Left ventricle myocardium inferior (tissue), 1 donor: ENCODE measurements at regions of chr22 and their contacts with region 1.

Region 1: DNA sequence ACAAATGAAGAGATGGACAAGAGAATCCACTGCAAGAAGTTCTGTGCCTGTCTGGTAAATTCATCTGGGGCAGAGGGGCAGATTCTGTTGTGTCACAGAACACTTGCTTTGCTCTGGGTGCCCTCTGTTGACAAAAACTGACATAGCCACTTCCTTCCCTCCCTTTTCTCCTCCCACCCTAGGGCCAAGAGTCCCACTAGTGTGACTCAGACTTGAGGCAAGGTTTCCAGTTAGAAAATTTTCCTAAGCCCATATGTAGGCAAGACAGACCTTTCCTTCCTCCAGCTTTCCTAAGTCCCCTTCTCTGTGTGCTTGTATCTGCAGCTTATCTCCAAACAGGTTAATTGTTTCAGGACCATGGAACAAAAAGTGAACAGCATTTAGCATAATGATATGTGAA is 106.8 kb downstream of the RBFOX2 start:
- DNase-seq: no peak
- H3K4me3 ChIP-seq: no peak overlapping the region
- H3K27ac ChIP-seq: peak overlapping the region; percentile 87
- H3K4me1 ChIP-seq: peaks cover 66% of the 10 kb centered on the region
- H3K27me3 ChIP-seq: no peaks in the 10 kb centered on the region
- CTCF ChIP-seq: peak; percentile 81

Region 2: GRCh38 chr22:35627264-35628041 is 294.3 kb before region 1 on chr22:
- intact Hi-C with region 1: loop called (anchors 5 kb)
- DNase-seq: peak; percentile 82
- H3K4me3 ChIP-seq: peak overlapping the region; percentile 70
- H3K27ac ChIP-seq: peak overlapping the region; percentile 91
- H3K4me1 ChIP-seq: peaks cover 38% of the 10 kb centered on the region
- H3K27me3 ChIP-seq: no peaks in the 10 kb centered on the region
- CTCF ChIP-seq: peak; percentile 63

Region 3: GRCh38 chr22:35761037-35761436 is 160.7 kb before region 1 on chr22:
- intact Hi-C with region 1: loop called (anchors 10 kb)
- DNase-seq: no peak
- H3K4me3 ChIP-seq: no peak overlapping the region
- H3K27ac ChIP-seq: peak overlapping the region; percentile 26
- H3K4me1 ChIP-seq: peaks cover 22% of the 10 kb centered on the region
- H3K27me3 ChIP-seq: no peaks in the 10 kb centered on the region
- CTCF ChIP-seq: peak; percentile 47